ENCODE measurements at regions of chr17 and their contacts with region 1.

Region 1: GRCh38 chr17:38333635-38334295 is 10.0 kb downstream of the GPR179 start:
- DNase-seq: peak; percentile 66
- ATAC-seq: peak; percentile 70
- H3K4me3 Mint-ChIP-seq: no peak overlapping the region
- H3K27ac Mint-ChIP-seq: no peak overlapping the region
- H3K4me1 Mint-ChIP-seq: no peaks in the 10 kb centered on the region
- H3K27me3 Mint-ChIP-seq: no peaks in the 10 kb centered on the region

Region 2: GRCh38 chr17:38322091-38322779 is 11.5 kb before region 1 on chr17:
- CTCF ChIA-PET with region 1: interaction called, 15 read pairs
- DNase-seq: peak; percentile 78
- ATAC-seq: peak; percentile 93
- H3K4me3 Mint-ChIP-seq: no peak overlapping the region
- H3K27ac Mint-ChIP-seq: no peak overlapping the region
- H3K4me1 Mint-ChIP-seq: peaks cover 7% of the 10 kb centered on the region
- H3K27me3 Mint-ChIP-seq: no peaks in the 10 kb centered on the region

Region 3: DNA sequence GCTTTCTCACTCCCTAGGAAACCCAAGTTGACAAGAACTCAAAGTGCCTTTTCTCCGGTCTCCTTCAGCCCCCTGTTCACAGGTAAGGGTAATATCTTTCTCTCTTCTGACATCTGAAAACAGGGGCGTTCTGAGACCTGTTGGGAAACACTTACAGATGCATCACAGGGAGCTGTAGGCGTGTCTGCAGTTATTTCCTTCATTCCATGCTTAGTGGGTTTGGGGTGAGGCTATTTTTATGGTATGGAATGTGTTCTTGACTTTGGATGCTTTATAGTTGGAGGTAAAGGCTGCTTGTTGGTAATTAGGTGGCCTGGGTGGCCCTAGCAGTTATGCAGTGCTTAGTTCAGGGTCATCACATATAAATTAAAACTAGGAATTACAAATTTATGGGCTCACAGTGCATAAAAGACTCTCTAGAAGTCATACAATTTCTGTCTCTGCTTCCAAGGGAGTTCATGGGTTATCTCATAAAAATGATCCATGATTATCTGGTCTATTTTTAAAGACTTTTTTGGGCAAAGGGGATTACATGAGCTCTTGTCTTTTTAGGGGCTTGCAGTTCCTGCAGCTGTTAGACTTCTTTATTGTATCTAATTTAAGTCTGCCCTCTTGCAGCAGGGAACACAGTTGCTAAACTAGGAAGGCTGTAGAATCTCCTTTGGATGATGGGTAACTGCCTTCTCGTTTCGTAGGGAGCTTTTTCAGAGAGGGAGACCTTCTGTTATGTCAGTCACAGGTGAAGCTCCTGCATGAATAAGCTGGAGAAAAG is 28.1 kb after region 1 on chr17:
- CTCF ChIA-PET with region 1: no interaction called
- DNase-seq: no peak
- ATAC-seq: no peak
- H3K4me3 Mint-ChIP-seq: no peak overlapping the region
- H3K27ac Mint-ChIP-seq: no peak overlapping the region
- H3K4me1 Mint-ChIP-seq: peaks cover under 1% of the 10 kb centered on the region
- H3K27me3 Mint-ChIP-seq: no peaks in the 10 kb centered on the region

Region 4: DNA sequence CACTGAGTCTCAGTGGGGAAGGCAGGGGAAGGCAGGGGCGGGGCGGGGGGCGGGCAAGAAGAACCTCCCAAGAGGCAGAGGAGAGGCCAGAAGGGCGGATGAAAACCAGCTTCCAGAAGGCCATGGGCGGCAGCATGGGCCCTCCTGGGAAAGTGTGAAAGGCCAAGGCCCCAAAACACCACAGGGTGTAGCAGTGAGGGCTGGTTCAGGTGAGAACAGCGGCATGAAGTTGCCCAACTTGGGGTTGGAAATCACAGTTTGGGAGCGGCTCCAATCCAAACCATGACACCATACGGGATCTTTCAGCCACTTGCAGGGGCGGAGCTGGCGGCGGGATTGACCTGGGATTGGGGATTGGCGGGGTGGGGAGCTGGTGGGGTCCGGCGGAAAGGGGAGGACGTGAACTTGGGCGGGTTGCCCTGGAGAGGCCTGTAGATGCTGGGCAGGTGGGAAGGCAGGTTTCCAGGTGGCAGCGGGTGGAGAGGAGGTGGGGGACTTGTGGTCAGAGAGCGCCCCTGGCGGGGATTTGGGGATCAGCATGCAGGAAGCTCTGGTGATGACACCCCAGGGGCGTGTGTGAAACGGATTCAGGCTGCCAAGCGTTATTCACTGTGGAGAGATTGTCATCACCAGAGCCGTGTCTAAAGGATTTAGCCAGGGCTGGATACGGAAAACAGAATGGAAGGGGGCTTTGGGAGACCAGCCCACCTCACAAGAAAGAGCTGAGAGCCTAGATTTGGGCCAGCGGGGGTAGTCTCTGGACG is 175.4 kb after region 1 on chr17:
- CTCF ChIA-PET with region 1: no interaction called
- DNase-seq: peak; percentile 80
- ATAC-seq: peak; percentile 87
- H3K4me3 Mint-ChIP-seq: no peak overlapping the region
- H3K27ac Mint-ChIP-seq: no peak overlapping the region
- H3K4me1 Mint-ChIP-seq: peaks cover 4% of the 10 kb centered on the region
- H3K27me3 Mint-ChIP-seq: peaks cover 41% of the 10 kb centered on the region

Measured in activated CD8-positive, alpha-beta memory T cell treated with anti-CD3 and anti-CD28 coated beads, Interleukin-2, amount 10 ng/mL, durations not matched to agents 7 days and 5 days (primary cell).